ENCODE measurements at regions of chr1 and their contacts with region 1.

Region 1: GRCh38 chr1:62407405-62408009 is 29.3 kb upstream of the USP1 start:
- DNase-seq: peak; percentile 78
- ATAC-seq: peak; percentile 71
- H3K4me3 ChIP-seq: no peak overlapping the region
- H3K27ac ChIP-seq: no peak overlapping the region
- H3K4me1 ChIP-seq: no peaks in the 10 kb centered on the region
- H3K27me3 ChIP-seq: no peaks in the 10 kb centered on the region
- CTCF ChIP-seq: peak; percentile 92

Region 2: DNA sequence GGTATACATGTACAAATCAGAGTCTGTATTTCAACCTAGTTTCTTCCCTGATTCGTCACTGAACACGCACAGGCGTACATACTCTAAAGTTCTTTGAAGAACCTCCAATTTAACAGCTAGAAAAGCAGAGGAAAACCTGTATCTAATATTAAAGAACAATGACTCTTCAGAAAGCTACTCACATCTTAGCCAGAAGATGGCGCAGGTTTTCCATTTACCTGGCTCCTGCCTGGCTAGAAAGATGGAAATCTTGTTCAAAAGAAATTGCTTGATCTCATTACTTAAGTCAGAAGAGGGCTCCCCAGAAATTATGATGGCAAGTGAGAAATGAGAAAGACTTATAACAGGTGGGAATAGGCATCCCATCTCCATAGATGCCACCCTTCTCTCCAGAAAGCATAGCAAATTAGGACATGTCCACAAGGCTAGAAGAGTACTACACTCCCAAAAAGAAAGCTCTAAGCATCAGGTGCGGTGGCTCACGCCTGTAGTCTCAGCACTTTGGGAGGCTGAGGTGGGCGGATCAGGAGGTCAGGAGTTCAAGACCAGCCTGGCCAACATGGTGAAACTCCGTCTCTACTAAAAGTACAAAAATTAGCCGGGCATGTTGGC is 231.8 kb before region 1 on chr1:
- CTCF ChIA-PET with region 1: interaction called, 6 read pairs
- POLR2A ChIA-PET with region 1: no interaction called
- intact Hi-C with region 1: loop called (anchors 1 kb)
- DNase-seq: peak; percentile 77
- ATAC-seq: peak; percentile 64
- H3K4me3 ChIP-seq: no peak overlapping the region
- H3K27ac ChIP-seq: no peak overlapping the region
- H3K4me1 ChIP-seq: peaks cover 7% of the 10 kb centered on the region; the same call in 1 of the 2 replicates
- H3K27me3 ChIP-seq: no peaks in the 10 kb centered on the region
- CTCF ChIP-seq: peak; percentile 88

Region 3: DNA sequence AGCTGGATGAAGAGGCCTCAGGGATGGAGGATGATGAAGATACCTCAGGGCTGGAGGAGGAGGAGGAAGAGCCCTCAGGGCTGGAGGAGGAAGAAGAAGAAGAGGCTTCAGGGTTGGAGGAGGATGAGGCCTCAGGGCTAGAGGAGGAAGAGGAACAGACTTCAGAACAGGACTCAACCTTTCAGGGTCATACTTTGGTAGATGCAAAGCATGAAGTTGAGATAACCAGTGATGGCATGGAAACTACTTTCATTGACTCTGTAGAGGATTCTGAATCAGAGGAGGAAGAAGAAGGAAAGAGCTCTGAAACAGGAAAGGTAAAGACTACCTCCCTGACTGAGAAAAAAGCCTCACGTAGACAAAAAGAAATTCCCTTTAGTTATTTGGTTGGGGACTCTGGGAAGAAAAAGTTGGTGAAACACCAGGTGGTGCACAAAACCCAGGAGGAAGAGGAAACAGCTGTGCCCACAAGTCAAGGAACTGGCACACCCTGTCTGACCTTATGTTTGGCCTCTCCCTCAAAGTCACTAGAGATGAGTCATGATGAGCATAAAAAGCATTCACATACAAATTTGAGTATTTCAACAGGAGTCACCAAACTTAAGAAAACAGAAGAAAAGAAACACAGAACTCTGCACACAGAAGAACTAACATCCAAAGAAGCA is 197.4 kb before region 1 on chr1:
- CTCF ChIA-PET with region 1: no interaction called
- POLR2A ChIA-PET with region 1: no interaction called
- intact Hi-C with region 1: loop called (anchors 1 kb)
- DNase-seq: peak; percentile 75
- ATAC-seq: peak; percentile 79
- H3K4me3 ChIP-seq: no peak overlapping the region
- H3K27ac ChIP-seq: no peak overlapping the region
- H3K4me1 ChIP-seq: peaks cover 10% of the 10 kb centered on the region
- H3K27me3 ChIP-seq: no peaks in the 10 kb centered on the region
- CTCF ChIP-seq: peak; percentile 58

Region 4: GRCh38 chr1:62295921-62296491 is 111.5 kb before region 1 on chr1:
- CTCF ChIA-PET with region 1: no interaction called
- POLR2A ChIA-PET with region 1: no interaction called
- intact Hi-C with region 1: loop called (anchors 5 kb)
- DNase-seq: peak; percentile 95
- ATAC-seq: peak; percentile 98
- H3K4me3 ChIP-seq: peak overlapping the region; percentile 54; the same call in 1 of the 2 replicates
- H3K27ac ChIP-seq: peak overlapping the region; percentile 75
- H3K4me1 ChIP-seq: peaks cover 21% of the 10 kb centered on the region
- H3K27me3 ChIP-seq: no peaks in the 10 kb centered on the region
- CTCF ChIP-seq: no peak

Measured in PC-3 (cell line).